Testis (tissue), 5 donors: ENCODE measurements at regions of chr15 and their contacts with region 1.

Region 1: GRCh38 chr15:62792986-62793751 is 249.4 kb upstream of the TPM1 start:
- DNase-seq: no peak
- H3K4me3 ChIP-seq: no peak overlapping the region
- H3K27ac ChIP-seq: no peak overlapping the region
- H3K4me1 ChIP-seq: no peaks in the 10 kb centered on the region
- H3K27me3 ChIP-seq: no peaks in the 10 kb centered on the region
- CTCF ChIP-seq: no peak
- POLR2A ChIP-seq: no peak

Region 2: GRCh38 chr15:62847900-62848489 is 54.8 kb after region 1 on chr15:
- intact Hi-C with region 1: loop called (anchors 10 kb)
- DNase-seq: peak; percentile 82
- H3K4me3 ChIP-seq: no peak overlapping the region
- H3K27ac ChIP-seq: no peak overlapping the region
- H3K4me1 ChIP-seq: no peaks in the 10 kb centered on the region
- H3K27me3 ChIP-seq: no peaks in the 10 kb centered on the region
- CTCF ChIP-seq: peak in 2 of 3 experiments; percentile 40 to 52
- POLR2A ChIP-seq: no peak

Region 3: DNA sequence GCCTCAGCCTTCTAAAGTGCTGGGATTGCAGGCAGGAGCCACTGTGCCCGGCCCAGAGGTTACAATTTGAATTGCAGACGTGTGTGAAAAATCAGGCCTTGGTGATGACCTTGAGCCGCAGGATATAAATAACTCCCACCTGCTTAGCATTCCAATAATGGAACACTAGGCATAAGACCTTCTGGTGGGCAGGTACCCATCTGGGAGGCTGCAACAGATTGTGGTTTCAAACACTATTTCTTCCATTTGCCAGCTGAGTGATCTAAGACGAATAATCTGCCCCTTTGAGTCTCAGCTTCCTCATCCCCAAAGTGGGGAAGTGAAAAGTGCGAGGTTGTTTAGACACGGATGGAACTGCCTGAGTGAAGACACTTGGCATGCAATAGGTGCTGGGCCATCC is 1088.3 kb after region 1 on chr15:
- intact Hi-C with region 1: no loop called
- DNase-seq: no peak
- H3K4me3 ChIP-seq: no peak overlapping the region
- H3K27ac ChIP-seq: no peak overlapping the region
- H3K4me1 ChIP-seq: no peaks in the 10 kb centered on the region
- H3K27me3 ChIP-seq: no peaks in the 10 kb centered on the region
- CTCF ChIP-seq: no peak
- POLR2A ChIP-seq: no peak